T-cell (primary cell): ENCODE measurements at regions of chr10 and their contacts with region 1.

Region 1: DNA sequence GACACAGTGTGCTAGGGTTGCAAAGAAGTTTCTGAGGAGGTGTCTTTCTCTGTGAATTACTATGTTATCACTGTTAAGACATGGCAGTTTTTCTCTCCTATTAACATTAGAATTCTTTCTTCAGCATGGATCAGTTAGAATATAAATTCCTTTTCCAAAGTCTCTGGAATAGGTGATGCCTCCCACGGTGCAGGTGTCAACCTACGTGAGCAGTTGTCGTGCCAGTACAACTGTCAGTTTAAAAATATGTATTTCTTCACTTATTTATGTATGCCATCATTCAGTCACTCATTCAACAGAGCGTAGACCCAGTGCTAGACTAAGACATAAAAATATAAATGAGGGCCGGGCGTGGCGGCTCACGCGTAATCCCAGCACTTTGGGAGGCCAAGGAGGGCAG is 83.5 kb downstream of the TACC2 start:
- DNase-seq: no peak
- ATAC-seq: no peak
- H3K4me3 ChIP-seq: no peak overlapping the region
- H3K4me3 Mint-ChIP-seq: no peak overlapping the region
- H3K27ac ChIP-seq: no peak overlapping the region
- H3K27ac Mint-ChIP-seq: no peak overlapping the region
- H3K4me1 ChIP-seq: no peaks in the 10 kb centered on the region
- H3K4me1 Mint-ChIP-seq: no peaks in the 10 kb centered on the region
- H3K27me3 ChIP-seq: peaks cover 0 to 9% of the 10 kb centered on the region in 2 experiments
- H3K27me3 Mint-ChIP-seq: peaks cover 0 to 13% of the 10 kb centered on the region in 2 donors

Region 2: DNA sequence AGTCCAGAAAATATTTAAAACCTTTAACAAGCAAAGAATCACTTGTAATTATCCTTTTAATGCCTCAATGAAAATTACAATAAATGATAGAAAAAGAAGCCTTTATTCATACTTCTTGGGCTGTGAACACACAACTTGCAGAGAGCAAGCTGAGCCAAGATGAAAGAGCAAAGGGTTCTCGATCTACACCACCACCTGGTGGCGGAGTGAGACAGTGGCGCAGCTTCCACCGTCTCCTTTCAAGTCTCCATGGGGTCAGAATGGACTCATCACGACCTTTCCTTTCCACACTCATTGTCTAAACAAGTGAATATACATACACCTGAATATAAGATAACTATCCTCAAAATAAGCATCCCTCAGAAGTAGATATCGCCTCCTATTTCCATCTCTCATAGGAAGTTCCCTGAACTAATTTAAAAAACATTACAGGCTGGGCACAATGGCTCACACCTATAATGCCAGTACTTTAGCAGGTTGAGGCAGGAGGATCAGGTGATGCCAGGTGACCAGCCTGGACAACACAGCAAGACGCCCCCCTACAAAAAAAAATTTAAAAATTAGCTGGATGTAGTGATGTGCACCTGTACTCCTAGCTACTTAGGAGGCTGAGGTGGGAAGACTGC is 185.4 kb before region 1 on chr10:
- CTCF ChIA-PET with region 1: no interaction called
- POLR2A ChIA-PET with region 1: no interaction called
- DNase-seq: peak in 28 of 35 experiments; percentile 2 to 53 (median 19)
- ATAC-seq: peak; percentile 49 to 61 (median 61)
- H3K4me3 ChIP-seq: no peak overlapping the region
- H3K4me3 Mint-ChIP-seq: no peak overlapping the region
- H3K27ac ChIP-seq: no peak overlapping the region
- H3K27ac Mint-ChIP-seq: no peak overlapping the region
- H3K4me1 ChIP-seq: no peaks in the 10 kb centered on the region
- H3K4me1 Mint-ChIP-seq: peaks cover 0 to 5% (median 0%) of the 10 kb centered on the region in 3 donors
- H3K27me3 ChIP-seq: no peaks in the 10 kb centered on the region
- H3K27me3 Mint-ChIP-seq: no peaks in the 10 kb centered on the region

Region 3: DNA sequence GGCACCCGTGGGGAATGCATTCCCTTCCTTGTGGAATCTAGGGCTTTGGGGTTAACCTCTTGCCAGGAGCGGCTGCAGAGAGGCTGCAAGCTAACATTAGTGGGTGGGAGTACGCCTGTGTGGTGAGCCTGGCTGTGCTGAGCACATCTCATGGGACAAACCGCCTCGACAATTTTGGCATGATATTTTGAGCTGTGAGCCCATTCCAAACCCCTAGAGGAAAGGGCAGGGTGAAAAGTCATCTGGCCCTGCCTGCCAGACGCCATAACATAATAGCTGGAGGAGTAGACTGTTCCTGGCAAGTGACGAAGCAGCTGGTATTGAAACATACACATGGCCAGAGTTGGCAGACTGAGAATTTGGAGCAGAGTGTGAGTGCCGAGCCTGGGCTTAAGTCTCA is 26.4 kb after region 1 on chr10:
- CTCF ChIA-PET with region 1: no interaction called
- POLR2A ChIA-PET with region 1: interaction called in 1 of 2 experiments, 10 read pairs
- DNase-seq: no peak
- ATAC-seq: no peak
- H3K4me3 ChIP-seq: no peak overlapping the region
- H3K4me3 Mint-ChIP-seq: no peak overlapping the region
- H3K27ac ChIP-seq: no peak overlapping the region
- H3K27ac Mint-ChIP-seq: no peak overlapping the region
- H3K4me1 ChIP-seq: no peaks in the 10 kb centered on the region
- H3K4me1 Mint-ChIP-seq: no peaks in the 10 kb centered on the region
- H3K27me3 ChIP-seq: peaks cover 0 to 17% of the 10 kb centered on the region in 2 experiments
- H3K27me3 Mint-ChIP-seq: peaks cover 10 to 12% of the 10 kb centered on the region in 2 donors